Naive thymus-derived CD4-positive, alpha-beta T cell (primary cell): ENCODE measurements at regions of chr9 and their contacts with region 1.

Region 1: GRCh38 chr9:36450110-36450732 is 50.2 kb upstream of the RNF38 start:
- DNase-seq: peak in 6 of 9 donors; percentile 17 to 36 (median 34)
- ATAC-seq: no peak
- H3K4me3 ChIP-seq: no peak overlapping the region
- H3K4me3 Mint-ChIP-seq: no peak overlapping the region
- H3K27ac ChIP-seq: no peak overlapping the region
- H3K27ac Mint-ChIP-seq: no peak overlapping the region
- H3K4me1 ChIP-seq: peaks cover 5 to 14% of the 10 kb centered on the region in 2 donors
- H3K4me1 Mint-ChIP-seq: peaks cover 0 to 57% (median 38%) of the 10 kb centered on the region in 7 donors
- H3K27me3 ChIP-seq: no peaks in the 10 kb centered on the region
- H3K27me3 Mint-ChIP-seq: no peaks in the 10 kb centered on the region

Region 2: DNA sequence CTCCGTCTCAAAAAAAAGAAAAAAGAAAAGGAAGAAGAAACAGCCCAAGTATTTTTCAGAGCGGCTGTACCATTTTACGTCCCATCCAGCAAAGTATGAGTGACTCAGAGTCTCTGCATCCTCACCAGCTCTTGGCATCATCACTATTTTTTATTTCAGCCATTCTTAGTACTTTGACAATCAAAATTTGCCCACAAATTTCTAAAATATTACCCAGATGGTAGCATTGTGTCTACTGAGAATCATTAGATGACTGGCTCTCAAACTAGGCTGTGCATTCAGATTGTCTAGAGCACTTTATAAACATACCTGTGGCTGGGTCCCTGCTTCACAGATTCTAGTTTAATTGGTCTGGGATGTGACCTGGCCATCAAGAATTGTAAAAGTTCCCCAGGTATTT is 100.9 kb after region 1 on chr9:
- CTCF ChIA-PET with region 1: interaction called, 33 read pairs
- POLR2A ChIA-PET with region 1: no interaction called
- intact Hi-C with region 1: loop called (anchors 1 kb)
- DNase-seq: no peak
- ATAC-seq: no peak
- H3K4me3 ChIP-seq: no peak overlapping the region
- H3K4me3 Mint-ChIP-seq: no peak overlapping the region
- H3K27ac ChIP-seq: no peak overlapping the region
- H3K27ac Mint-ChIP-seq: no peak overlapping the region
- H3K4me1 ChIP-seq: no peaks in the 10 kb centered on the region
- H3K4me1 Mint-ChIP-seq: peaks cover 0 to 6% (median 2%) of the 10 kb centered on the region in 7 donors
- H3K27me3 ChIP-seq: no peaks in the 10 kb centered on the region
- H3K27me3 Mint-ChIP-seq: peaks cover 0 to 22% (median 3%) of the 10 kb centered on the region in 5 donors

Region 3: DNA sequence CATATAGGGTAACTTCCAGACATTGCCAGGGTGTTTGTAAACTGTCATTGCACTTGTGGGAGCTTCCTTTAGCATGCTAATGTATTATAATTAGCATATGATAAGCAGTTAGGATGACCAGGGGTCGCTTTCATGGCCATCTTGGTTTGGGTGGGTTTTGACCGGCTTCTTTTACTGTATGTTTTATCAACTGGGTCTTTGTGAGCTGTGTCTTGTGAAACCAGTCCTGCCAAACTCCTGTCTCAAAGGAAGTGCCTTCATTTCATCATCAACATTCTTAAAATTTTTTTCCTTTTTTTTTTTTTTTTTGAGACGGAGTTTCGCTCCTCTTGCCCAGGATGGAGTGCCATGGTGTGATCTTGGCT is 110.6 kb after region 1 on chr9:
- CTCF ChIA-PET with region 1: interaction called, 33 read pairs
- POLR2A ChIA-PET with region 1: no interaction called
- intact Hi-C with region 1: loop called in 1 of 2 experiments (anchors 1 kb)
- DNase-seq: no peak
- ATAC-seq: no peak
- H3K4me3 ChIP-seq: no peak overlapping the region
- H3K4me3 Mint-ChIP-seq: no peak overlapping the region
- H3K27ac ChIP-seq: no peak overlapping the region
- H3K27ac Mint-ChIP-seq: no peak overlapping the region
- H3K4me1 ChIP-seq: no peaks in the 10 kb centered on the region
- H3K4me1 Mint-ChIP-seq: peaks cover 0 to 2% (median under 1%) of the 10 kb centered on the region in 7 donors
- H3K27me3 ChIP-seq: no peaks in the 10 kb centered on the region
- H3K27me3 Mint-ChIP-seq: no peaks in the 10 kb centered on the region